Activated B cell treated with CpG ODN at 0.5 μM for 24 hours (primary cell): ENCODE measurements at regions of chr2 and their contacts with region 1.

Region 1: GRCh38 chr2:213251618-213252017 is 32.6 kb upstream of the SPAG16 start:
- DNase-seq: no peak
- ATAC-seq: peak; percentile 77
- H3K4me3 Mint-ChIP-seq: no peak overlapping the region
- H3K27ac Mint-ChIP-seq: no peak overlapping the region
- H3K4me1 Mint-ChIP-seq: no peaks in the 10 kb centered on the region
- H3K27me3 Mint-ChIP-seq: peaks cover 3% of the 10 kb centered on the region
- CTCF ChIP-seq: peak; percentile 49

Region 2: DNA sequence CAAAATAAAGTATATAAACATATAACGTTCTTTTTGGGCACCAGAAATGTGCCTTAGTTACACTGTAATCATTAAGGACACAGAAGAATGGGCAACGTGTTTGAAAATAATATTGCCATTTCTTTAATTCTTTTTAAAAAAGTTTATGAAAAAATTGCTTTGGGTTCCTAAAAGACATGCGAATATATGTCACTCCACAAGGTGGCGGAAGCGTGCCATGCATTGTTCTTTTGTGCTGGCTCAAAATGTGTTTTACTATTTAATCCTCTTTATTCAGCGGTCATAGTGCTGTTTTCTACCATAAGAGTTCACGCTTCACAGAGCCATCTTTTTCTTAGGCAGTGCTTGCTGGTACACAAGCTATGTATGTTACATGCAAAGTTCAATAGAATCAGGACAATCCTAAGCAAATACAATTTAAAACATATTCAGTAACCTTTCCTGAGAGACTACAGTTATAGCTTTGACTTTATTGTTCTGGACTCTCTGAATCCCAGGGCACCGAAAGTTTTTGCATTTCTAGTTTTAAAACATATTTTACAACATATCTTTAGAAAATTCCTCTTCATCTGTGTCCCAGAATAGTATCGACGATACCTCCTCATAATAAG is 565.2 kb before region 1 on chr2:
- CTCF ChIA-PET with region 1: no interaction called
- POLR2A ChIA-PET with region 1: no interaction called
- intact Hi-C with region 1: loop called (anchors 1 kb)
- DNase-seq: no peak
- ATAC-seq: peak; percentile 45
- H3K4me3 Mint-ChIP-seq: no peak overlapping the region
- H3K27ac Mint-ChIP-seq: no peak overlapping the region
- H3K4me1 Mint-ChIP-seq: no peaks in the 10 kb centered on the region
- H3K27me3 Mint-ChIP-seq: peaks cover 4% of the 10 kb centered on the region
- CTCF ChIP-seq: peak; percentile 81

Region 3: GRCh38 chr2:212863185-212863588 is 388.4 kb before region 1 on chr2:
- CTCF ChIA-PET with region 1: no interaction called
- POLR2A ChIA-PET with region 1: no interaction called
- intact Hi-C with region 1: loop called (anchors 1 kb)
- DNase-seq: no peak
- ATAC-seq: no peak
- H3K4me3 Mint-ChIP-seq: no peak overlapping the region
- H3K27ac Mint-ChIP-seq: no peak overlapping the region
- H3K4me1 Mint-ChIP-seq: no peaks in the 10 kb centered on the region
- H3K27me3 Mint-ChIP-seq: no peaks in the 10 kb centered on the region
- CTCF ChIP-seq: no peak

Region 4: GRCh38 chr2:213227458-213227857 is 24.2 kb before region 1 on chr2:
- CTCF ChIA-PET with region 1: no interaction called
- POLR2A ChIA-PET with region 1: no interaction called
- intact Hi-C with region 1: no loop called
- DNase-seq: no peak
- ATAC-seq: peak; percentile 84
- H3K4me3 Mint-ChIP-seq: peak overlapping the region; percentile 65
- H3K27ac Mint-ChIP-seq: peak overlapping the region; percentile 90
- H3K4me1 Mint-ChIP-seq: peaks cover 60% of the 10 kb centered on the region
- H3K27me3 Mint-ChIP-seq: no peaks in the 10 kb centered on the region
- CTCF ChIP-seq: no peak

Region 5: GRCh38 chr2:213284105-213285090 is 32.8 kb after region 1 on chr2 and contains the start of gene SPAG16:
- CTCF ChIA-PET with region 1: interaction called, 11 read pairs
- POLR2A ChIA-PET with region 1: interaction called, 3 read pairs
- intact Hi-C with region 1: no loop called
- DNase-seq: peak; percentile 89
- ATAC-seq: peak; percentile 98
- H3K4me3 Mint-ChIP-seq: peak within 1 kb of the TSS; percentile 96
- H3K27ac Mint-ChIP-seq: peak within 1 kb of the TSS; percentile 87
- H3K4me1 Mint-ChIP-seq: peaks cover 24% of the 10 kb centered on the region
- H3K27me3 Mint-ChIP-seq: no peaks in the 10 kb centered on the region
- CTCF ChIP-seq: no peak
- total RNA-seq, gene SPAG16: 11.2 and 11.5 TPM in 2 replicates

Region 6: DNA sequence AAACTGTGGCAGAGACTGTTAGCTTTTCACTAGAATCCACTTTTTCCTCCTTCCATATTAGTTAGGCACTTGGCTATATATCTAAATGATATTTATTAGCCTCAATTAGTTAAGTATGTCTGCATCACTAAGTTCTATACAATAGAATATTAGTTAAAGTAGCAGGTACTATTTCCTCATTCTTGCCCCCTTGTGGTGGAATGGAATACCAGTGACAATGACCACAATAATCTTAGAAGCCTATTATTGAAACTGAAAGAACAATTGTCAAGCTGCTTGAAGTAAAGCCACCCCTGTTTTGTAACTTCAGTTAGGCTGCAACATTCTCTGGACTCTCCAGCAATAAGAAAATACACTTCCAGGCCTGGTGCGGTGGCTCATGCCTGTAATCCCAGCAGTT is 682.9 kb after region 1 on chr2:
- CTCF ChIA-PET with region 1: interaction called, 18 read pairs
- POLR2A ChIA-PET with region 1: no interaction called
- intact Hi-C with region 1: loop called (anchors 1 kb)
- DNase-seq: no peak
- ATAC-seq: no peak
- H3K4me3 Mint-ChIP-seq: no peak overlapping the region
- H3K27ac Mint-ChIP-seq: no peak overlapping the region
- H3K4me1 Mint-ChIP-seq: no peaks in the 10 kb centered on the region
- H3K27me3 Mint-ChIP-seq: peaks cover 4% of the 10 kb centered on the region
- CTCF ChIP-seq: no peak